GM10248 (cell line): ENCODE measurements at regions of chr5 and their contacts with region 1.

Region 1: GRCh38 chr5:99060306-99061261 is 131.8 kb upstream of the CHD1 start:
- DNase-seq: peak; percentile 60
- CTCF ChIP-seq: peak; percentile 70

Region 2: GRCh38 chr5:98905857-98906690 is 154.5 kb before region 1 on chr5:
- CTCF ChIA-PET with region 1: interaction called, 64 read pairs
- POLR2A ChIA-PET with region 1: no interaction called
- DNase-seq: peak; percentile 19
- CTCF ChIP-seq: peak; percentile 66

Region 3: GRCh38 chr5:99037668-99038067 is 22.9 kb before region 1 on chr5:
- CTCF ChIA-PET with region 1: interaction called, 13 read pairs
- POLR2A ChIA-PET with region 1: no interaction called
- DNase-seq: no peak
- CTCF ChIP-seq: no peak

Region 4: DNA sequence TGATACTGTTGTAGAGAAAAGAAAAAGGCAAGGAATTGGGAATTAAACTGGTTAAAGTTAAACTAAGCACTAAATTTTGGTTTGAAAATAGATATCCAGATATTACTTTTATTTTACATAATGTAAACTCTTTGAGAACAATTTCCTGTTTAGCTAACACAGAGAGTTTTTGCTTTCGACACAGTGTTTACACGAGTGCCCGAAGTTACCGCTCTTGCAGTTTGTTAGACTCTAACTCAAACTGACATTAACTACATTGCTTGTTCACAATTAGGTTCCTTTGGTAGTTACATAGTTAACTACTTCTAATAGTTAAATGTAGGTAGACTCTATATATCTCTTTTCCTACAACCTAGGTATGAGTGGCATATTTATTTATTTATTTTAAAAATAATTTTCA is 14.7 kb before region 1 on chr5:
- CTCF ChIA-PET with region 1: interaction called, 15 read pairs
- POLR2A ChIA-PET with region 1: no interaction called
- DNase-seq: no peak
- CTCF ChIP-seq: no peak

Region 5: DNA sequence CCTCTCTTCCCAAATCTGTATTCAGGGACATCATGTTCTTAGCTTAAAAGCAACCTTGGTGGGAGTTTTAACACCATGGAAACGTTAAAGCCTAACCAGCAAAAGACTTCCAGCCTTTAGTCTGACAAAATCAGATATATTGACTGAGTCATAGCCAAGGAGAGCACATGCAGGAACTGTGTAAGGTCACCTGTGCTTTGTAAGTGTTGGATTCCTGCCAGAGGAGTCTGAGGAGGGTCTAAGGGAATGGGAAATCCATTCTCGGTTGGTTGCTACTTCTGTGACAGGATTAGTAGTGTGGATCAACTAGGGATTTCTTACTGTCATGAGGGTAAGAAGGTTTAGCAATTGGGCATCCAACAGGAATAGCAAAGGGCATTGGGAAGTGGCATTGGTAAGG is 10.2 kb after region 1 on chr5:
- CTCF ChIA-PET with region 1: interaction called, 16 read pairs
- POLR2A ChIA-PET with region 1: no interaction called
- DNase-seq: no peak
- CTCF ChIP-seq: no peak

Region 6: DNA sequence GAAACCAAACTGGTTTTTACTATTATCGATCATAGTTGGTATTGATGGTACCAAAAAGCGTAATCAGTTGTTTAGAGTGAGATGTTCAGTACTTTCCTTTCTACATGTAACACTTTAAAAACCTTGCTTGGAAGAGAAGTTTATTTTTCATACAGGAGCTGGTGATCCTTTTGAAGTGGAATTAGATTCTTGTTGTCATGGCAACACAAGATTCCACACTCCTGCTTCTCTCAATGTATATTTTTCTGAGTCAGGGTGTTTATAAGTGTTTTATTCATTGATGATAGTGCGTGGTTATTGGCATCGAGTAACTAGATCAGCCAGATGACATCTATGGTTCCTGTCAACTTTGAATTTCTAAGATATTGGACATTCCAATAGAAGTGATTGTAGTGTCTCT is 49.3 kb after region 1 on chr5:
- CTCF ChIA-PET with region 1: no interaction called
- POLR2A ChIA-PET with region 1: no interaction called
- DNase-seq: no peak
- CTCF ChIP-seq: no peak